Ascending aorta (tissue), 2 donors: ENCODE measurements at regions of chr9 and their contacts with region 1.

Region 1: DNA sequence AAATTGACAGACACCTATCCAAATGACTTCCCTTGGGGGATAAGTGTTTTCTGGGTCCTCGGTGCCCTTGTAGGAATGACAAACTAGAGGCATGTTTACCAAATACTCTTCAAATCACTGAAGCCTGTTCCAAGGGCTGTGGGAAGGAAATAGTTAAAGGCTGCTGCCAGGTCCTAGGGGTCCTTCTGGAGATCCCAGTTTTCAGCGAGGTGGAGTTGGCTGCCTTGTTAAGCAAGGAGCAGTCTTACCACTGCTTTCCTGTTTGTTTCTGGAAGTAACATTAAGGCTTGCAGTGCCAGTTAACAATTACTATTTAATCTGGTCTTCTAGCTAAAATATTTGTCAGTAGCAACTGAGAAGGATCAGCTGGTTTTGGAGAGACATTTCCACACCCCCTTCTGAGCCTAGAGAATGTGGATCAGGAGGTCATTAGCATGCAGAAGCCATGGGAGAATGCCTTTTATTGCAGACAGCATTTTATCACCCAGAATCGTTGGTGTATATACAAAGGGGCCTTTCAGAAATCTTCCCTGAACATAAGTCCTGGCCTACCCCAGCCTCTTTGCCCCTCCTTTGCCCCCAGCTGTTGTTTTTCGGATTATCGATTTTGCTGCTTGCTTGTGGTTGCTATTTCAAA is 238.8 kb downstream of the DMAC1 start:
- DNase-seq: no peak
- H3K4me3 ChIP-seq: no peak overlapping the region
- H3K27ac ChIP-seq: no peak overlapping the region
- H3K4me1 ChIP-seq: no peaks in the 10 kb centered on the region
- H3K27me3 ChIP-seq: no peaks in the 10 kb centered on the region
- CTCF ChIP-seq: no peak

Region 2: DNA sequence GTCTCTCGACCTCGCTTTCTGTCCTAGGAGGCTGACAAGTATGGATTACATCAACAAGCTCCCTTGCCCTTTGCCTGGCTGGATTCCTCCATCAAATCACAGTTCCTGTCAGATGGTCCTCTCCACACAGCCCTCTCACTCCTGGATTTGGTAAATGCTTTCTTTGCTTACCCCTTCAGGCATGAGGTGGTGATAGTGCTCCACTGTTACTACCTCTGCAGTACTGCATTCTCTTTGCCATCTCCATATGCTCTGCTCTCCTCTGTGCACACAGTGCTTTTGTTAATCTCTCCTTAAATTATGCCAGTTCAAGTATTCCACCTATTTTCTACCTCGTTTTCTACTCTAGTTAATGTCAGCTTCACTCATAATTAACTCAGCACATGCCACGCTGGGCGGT is 40.4 kb before region 1 on chr9:
- intact Hi-C with region 1: no loop called
- DNase-seq: no peak
- H3K4me3 ChIP-seq: no peak overlapping the region
- H3K27ac ChIP-seq: no peak overlapping the region
- H3K4me1 ChIP-seq: no peaks in the 10 kb centered on the region
- H3K27me3 ChIP-seq: no peaks in the 10 kb centered on the region
- CTCF ChIP-seq: no peak

Region 3: DNA sequence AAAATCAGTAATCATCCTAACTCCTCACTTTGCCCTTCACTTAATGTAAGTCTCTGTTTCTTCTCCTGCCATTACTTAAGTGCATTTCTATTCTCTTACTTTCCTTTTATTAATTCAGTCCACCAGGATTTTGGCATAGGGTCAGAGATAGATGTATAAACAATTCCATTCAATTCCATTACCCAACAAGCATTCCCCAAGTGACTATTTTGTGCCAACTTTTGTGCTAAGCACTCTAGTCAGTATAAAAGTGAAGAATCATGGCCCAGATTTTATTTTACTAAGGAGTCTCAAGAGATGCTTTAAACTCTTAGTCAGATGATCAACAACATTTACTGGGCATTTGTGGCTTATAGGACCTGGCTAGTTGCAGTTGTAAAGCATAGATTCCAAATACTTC is 79.4 kb after region 1 on chr9:
- intact Hi-C with region 1: no loop called
- DNase-seq: no peak
- H3K4me3 ChIP-seq: no peak overlapping the region
- H3K27ac ChIP-seq: peak overlapping the region in 1 of 2 donors; percentile 12
- H3K4me1 ChIP-seq: peaks cover 0 to 11% of the 10 kb centered on the region in 2 donors
- H3K27me3 ChIP-seq: no peaks in the 10 kb centered on the region
- CTCF ChIP-seq: no peak

Region 4: DNA sequence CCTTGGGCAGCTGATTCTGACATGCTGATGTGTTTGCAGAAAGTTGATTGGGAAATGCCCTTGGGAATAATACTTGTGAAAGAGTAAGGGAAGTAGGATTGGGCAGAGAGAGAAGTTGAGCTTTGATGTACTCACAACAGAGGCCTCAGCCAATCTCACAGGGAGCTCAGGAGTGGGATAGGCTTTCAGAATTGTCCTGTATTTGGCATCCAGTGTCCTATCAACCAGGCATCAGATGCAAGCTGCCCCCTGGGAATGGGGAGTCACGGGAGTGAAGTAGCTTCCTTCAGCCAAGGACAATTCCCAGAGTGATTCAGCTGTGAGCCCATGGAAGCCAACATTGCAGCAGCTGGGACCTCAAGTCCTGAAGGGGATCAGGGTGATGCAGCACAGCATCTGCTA is 199.2 kb after region 1 on chr9:
- intact Hi-C with region 1: loop called (anchors 10 kb)
- DNase-seq: no peak
- H3K4me3 ChIP-seq: no peak overlapping the region
- H3K27ac ChIP-seq: no peak overlapping the region
- H3K4me1 ChIP-seq: no peaks in the 10 kb centered on the region
- H3K27me3 ChIP-seq: no peaks in the 10 kb centered on the region
- CTCF ChIP-seq: no peak